ENCODE measurements at regions of chr6 and their contacts with region 1.

Region 1: GRCh38 chr6:154805288-154805911 is 72.2 kb downstream of the SCAF8 start:
- DNase-seq: no peak
- H3K4me3 Mint-ChIP-seq: no peak overlapping the region
- H3K27ac Mint-ChIP-seq: no peak overlapping the region
- H3K4me1 Mint-ChIP-seq: peaks cover under 1% of the 10 kb centered on the region
- H3K27me3 Mint-ChIP-seq: no peaks in the 10 kb centered on the region

Region 2: GRCh38 chr6:154579485-154579884 is 225.9 kb before region 1 on chr6:
- CTCF ChIA-PET with region 1: no interaction called
- DNase-seq: no peak
- H3K4me3 Mint-ChIP-seq: no peak overlapping the region
- H3K27ac Mint-ChIP-seq: no peak overlapping the region
- H3K4me1 Mint-ChIP-seq: no peaks in the 10 kb centered on the region
- H3K27me3 Mint-ChIP-seq: no peaks in the 10 kb centered on the region

Region 3: DNA sequence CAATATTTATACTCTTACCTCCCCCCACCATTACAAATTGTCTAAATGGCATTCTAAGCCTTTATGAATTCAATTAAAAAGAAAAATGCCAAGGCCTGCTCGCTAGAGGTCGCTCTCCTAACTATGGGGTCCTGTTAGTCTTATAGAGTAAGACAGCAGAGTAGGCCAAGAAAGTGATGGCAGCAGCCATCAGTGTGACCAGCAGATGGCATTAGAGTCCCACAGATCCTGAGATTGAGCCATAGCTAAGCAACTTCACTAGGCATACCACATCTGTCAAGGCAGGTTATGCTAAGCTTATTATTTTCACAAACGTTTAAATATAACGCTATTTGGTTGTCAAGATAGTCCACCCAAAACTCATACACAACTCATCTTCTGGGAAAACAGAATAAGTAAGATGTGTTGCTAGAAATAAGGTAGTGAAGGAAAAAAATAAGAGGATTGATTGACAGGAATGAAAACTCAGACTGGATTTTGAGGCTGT is 129.8 kb before region 1 on chr6:
- CTCF ChIA-PET with region 1: interaction called, 101 read pairs
- DNase-seq: peak; percentile 93
- H3K4me3 Mint-ChIP-seq: no peak overlapping the region
- H3K27ac Mint-ChIP-seq: no peak overlapping the region
- H3K4me1 Mint-ChIP-seq: no peaks in the 10 kb centered on the region
- H3K27me3 Mint-ChIP-seq: peaks cover 5% of the 10 kb centered on the region